ENCODE measurements at regions of chr11 and their contacts with region 1.

Region 1: GRCh38 chr11:72471005-72471898 is 36.9 kb upstream of the CLPB start:
- DNase-seq: peak; percentile 72
- ATAC-seq: peak; percentile 88
- H3K4me3 Mint-ChIP-seq: peak overlapping the region; percentile 24
- H3K27ac Mint-ChIP-seq: no peak overlapping the region
- H3K4me1 Mint-ChIP-seq: peaks cover 7% of the 10 kb centered on the region
- H3K27me3 Mint-ChIP-seq: peaks cover 58% of the 10 kb centered on the region

Region 2: DNA sequence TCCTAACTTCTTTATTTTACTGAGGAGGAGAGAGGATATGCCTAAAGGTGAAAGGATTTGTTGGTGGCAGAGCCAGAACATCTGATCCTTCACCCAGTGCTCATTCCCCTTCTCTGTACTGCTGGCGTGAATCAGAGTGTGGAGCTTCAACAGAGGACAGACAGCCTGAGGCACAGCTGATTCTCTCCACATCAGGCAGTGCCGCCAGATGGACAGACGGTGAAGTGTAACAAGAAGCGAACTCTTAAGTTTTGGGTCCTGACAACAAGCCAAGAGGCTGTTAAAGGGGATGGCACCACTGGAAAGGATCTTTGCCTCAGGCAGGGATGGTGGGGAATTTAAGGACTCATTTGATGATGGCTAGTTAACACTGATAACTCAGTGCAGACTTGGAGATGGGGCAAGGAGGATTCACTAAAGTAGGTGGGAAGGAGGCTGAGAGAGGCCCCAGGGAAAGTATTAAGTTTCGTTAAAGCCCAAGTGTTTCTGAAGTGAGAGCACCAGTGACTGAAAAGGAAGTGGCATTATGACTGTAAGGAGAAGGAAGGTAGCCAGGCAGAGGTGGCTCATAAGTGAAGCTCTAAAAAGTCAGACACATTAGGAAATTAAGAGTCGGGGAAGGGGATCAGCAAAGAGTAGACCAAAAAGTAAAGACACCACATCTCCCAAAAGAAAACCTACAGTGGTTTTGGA is 118.2 kb before region 1 on chr11:
- CTCF ChIA-PET with region 1: no interaction called
- DNase-seq: peak; percentile 46
- ATAC-seq: peak; percentile 89
- H3K4me3 Mint-ChIP-seq: no peak overlapping the region
- H3K27ac Mint-ChIP-seq: no peak overlapping the region
- H3K4me1 Mint-ChIP-seq: no peaks in the 10 kb centered on the region
- H3K27me3 Mint-ChIP-seq: no peaks in the 10 kb centered on the region

Region 3: GRCh38 chr11:72483412-72484186 is 12.3 kb after region 1 on chr11:
- CTCF ChIA-PET with region 1: interaction called, 20 read pairs
- DNase-seq: no peak
- ATAC-seq: peak; percentile 49
- H3K4me3 Mint-ChIP-seq: no peak overlapping the region
- H3K27ac Mint-ChIP-seq: peak overlapping the region; percentile 40
- H3K4me1 Mint-ChIP-seq: peaks cover 16% of the 10 kb centered on the region
- H3K27me3 Mint-ChIP-seq: peaks cover 8% of the 10 kb centered on the region

Region 4: DNA sequence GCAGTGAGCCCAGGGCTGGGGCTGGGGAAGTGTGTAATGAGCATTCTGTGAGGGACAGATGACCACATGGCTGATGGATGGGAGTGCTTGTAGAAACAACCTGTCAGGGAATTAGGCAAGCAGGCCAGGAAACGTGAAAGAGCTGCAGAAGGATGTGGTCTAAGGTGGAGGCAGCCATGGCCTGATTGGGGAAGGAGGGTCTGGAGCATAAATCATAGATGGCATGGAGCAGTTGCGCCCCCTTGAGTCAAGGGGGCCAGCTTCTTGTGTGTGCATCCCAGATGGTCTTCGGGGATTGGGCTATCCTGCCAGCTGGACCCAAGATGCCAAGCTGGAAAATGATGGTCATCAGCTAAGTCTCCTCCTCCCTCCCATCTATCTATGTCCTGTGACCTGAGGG is 82.5 kb after region 1 on chr11:
- CTCF ChIA-PET with region 1: interaction called, 56 read pairs
- DNase-seq: peak; percentile 66
- ATAC-seq: peak; percentile 73
- H3K4me3 Mint-ChIP-seq: no peak overlapping the region
- H3K27ac Mint-ChIP-seq: no peak overlapping the region
- H3K4me1 Mint-ChIP-seq: peaks cover 12% of the 10 kb centered on the region
- H3K27me3 Mint-ChIP-seq: peaks cover 19% of the 10 kb centered on the region

Region 5: DNA sequence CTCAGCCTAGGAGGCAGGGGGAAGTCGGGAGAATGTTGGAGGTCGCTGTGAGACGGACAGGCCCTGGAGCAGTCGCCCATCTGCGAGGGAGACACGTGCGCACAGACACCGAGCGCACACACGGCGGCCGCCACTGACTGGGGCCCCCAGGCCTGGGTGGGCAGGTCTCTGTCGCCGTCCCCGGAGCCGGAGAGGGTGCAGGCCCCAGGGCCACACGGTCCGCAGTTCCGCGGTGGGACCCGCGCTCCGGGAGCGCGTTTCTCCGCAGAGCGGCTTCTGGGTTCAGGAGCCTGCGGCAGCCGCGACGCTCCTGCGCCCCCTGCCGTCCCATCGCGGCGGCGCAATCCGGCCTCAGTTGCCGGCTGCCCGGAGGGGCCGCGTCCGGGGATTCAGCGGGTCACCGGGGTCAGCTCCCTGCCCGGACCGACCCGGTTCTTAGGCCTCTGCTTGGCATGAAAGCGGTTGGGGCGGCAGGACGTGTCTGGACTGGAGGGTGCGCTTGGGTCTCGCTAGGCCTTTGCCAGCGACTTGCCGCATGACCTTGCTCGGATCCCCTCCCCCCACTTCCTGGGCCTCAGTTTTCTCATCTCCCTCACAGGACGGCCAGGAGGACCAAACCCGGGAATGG is 171.7 kb after region 1 on chr11:
- CTCF ChIA-PET with region 1: interaction called, 32 read pairs
- DNase-seq: peak; percentile 72
- ATAC-seq: peak; percentile 85
- H3K4me3 Mint-ChIP-seq: no peak overlapping the region
- H3K27ac Mint-ChIP-seq: no peak overlapping the region
- H3K4me1 Mint-ChIP-seq: peaks cover 2% of the 10 kb centered on the region
- H3K27me3 Mint-ChIP-seq: peaks cover 6% of the 10 kb centered on the region

Measured in activated CD8-positive, alpha-beta memory T cell treated with anti-CD3 and anti-CD28 coated beads, Interleukin-2, amount 10 ng/mL, durations not matched to agents 7 days and 5 days (primary cell).